Mammary epithelial cell (primary cell): ENCODE measurements at regions of chr15 and their contacts with region 1.

Region 1: DNA sequence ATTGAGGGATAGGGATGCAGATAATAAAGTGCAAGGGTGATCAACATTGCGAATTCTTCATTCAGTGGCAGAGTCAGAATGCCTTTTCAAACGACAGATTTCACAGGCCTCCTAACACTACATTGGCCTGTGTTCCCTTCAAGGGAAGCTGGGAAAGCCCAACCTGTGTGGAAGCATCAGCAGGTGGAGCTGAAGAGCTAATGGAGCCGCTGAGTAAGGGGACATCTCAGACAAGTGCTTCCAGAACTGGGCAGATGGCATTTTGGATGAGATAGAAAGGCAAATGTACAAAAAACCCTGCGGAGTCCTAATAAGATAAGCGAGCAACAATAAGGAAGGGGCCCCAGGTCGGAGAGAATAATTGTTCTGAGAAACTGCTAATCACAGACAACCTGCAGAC is 8.5 kb upstream of the SLC24A5 start:
- DNase-seq: peak; percentile 12
- H3K4me3 ChIP-seq: no peak overlapping the region
- H3K27ac ChIP-seq: no peak overlapping the region
- H3K4me1 ChIP-seq: no peaks in the 10 kb centered on the region
- H3K27me3 ChIP-seq: no peaks in the 10 kb centered on the region
- CTCF ChIP-seq: peak; percentile 38 to 74

Region 2: GRCh38 chr15:48190932-48191573 is 78.8 kb after region 1 on chr15:
- CTCF ChIA-PET with region 1: no interaction called
- dilution Hi-C with region 1: no loop called
- in situ Hi-C with region 1: no loop called
- intact Hi-C with region 1: no loop called
- DNase-seq: peak; percentile 60
- H3K4me3 ChIP-seq: no peak overlapping the region
- H3K27ac ChIP-seq: no peak overlapping the region
- H3K4me1 ChIP-seq: no peaks in the 10 kb centered on the region
- H3K27me3 ChIP-seq: no peaks in the 10 kb centered on the region
- CTCF ChIP-seq: no peak

Region 3: GRCh38 chr15:48205981-48206380 is 93.7 kb after region 1 on chr15 and contains the start of gene SLC12A1:
- CTCF ChIA-PET with region 1: no interaction called
- dilution Hi-C with region 1: no loop called
- in situ Hi-C with region 1: no loop called
- intact Hi-C with region 1: loop called (anchors 1 kb)
- DNase-seq: no peak
- H3K4me3 ChIP-seq: no peak within 1 kb of the TSS
- H3K27ac ChIP-seq: no peak within 1 kb of the TSS
- H3K4me1 ChIP-seq: no peaks in the 10 kb centered on the region
- H3K27me3 ChIP-seq: peaks cover 2% of the 10 kb centered on the region
- CTCF ChIP-seq: no peak
- total RNA-seq, gene SLC12A1: not detected

Region 4: DNA sequence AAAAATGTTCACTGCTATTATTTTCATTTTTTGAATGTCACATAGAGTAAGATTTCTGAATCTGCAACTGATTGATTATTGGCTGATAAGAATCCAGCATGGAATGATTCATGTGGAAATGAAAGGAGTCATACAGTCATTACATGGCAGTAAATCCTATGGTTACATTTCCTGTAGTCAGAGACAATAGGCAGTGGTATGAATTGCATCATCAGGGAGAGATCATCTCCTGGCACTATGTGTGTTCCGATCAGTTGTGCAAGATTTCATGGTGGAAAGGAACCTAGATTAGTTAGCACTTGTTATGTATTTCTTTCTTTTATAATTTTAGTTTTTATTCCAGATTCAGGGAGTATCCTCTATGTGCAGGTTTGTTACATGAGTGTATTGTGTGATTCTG is 132.7 kb after region 1 on chr15:
- CTCF ChIA-PET with region 1: no interaction called
- dilution Hi-C with region 1: no loop called
- in situ Hi-C with region 1: loop called in 1 of 2 experiments (anchors 10 kb)
- intact Hi-C with region 1: loop called (anchors 1 kb)
- DNase-seq: peak; percentile 44
- H3K4me3 ChIP-seq: no peak overlapping the region
- H3K27ac ChIP-seq: no peak overlapping the region
- H3K4me1 ChIP-seq: no peaks in the 10 kb centered on the region
- H3K27me3 ChIP-seq: peaks cover 5% of the 10 kb centered on the region
- CTCF ChIP-seq: no peak

Region 5: GRCh38 chr15:48250640-48251076 is 138.4 kb after region 1 on chr15:
- CTCF ChIA-PET with region 1: no interaction called
- dilution Hi-C with region 1: no loop called
- in situ Hi-C with region 1: loop called in 1 of 2 experiments (anchors 10 kb)
- intact Hi-C with region 1: loop called (anchors 1 kb)
- DNase-seq: peak; percentile 67
- H3K4me3 ChIP-seq: no peak overlapping the region
- H3K27ac ChIP-seq: no peak overlapping the region
- H3K4me1 ChIP-seq: no peaks in the 10 kb centered on the region
- H3K27me3 ChIP-seq: peaks cover 5% of the 10 kb centered on the region
- CTCF ChIP-seq: peak; percentile 62 to 67

Region 6: GRCh38 chr15:48285329-48286214 is 173.3 kb after region 1 on chr15:
- CTCF ChIA-PET with region 1: no interaction called
- dilution Hi-C with region 1: no loop called
- in situ Hi-C with region 1: no loop called
- intact Hi-C with region 1: loop called (anchors 1 kb)
- DNase-seq: peak; percentile 63
- H3K4me3 ChIP-seq: no peak overlapping the region
- H3K27ac ChIP-seq: no peak overlapping the region
- H3K4me1 ChIP-seq: no peaks in the 10 kb centered on the region
- H3K27me3 ChIP-seq: peaks cover 6% of the 10 kb centered on the region
- CTCF ChIP-seq: peak; percentile 66 to 67